ENCODE measurements at regions of chr12 and their contacts with region 1.

Region 1: GRCh38 chr12:104201238-104202001 is 14.2 kb upstream of the TXNRD1 start:
- DNase-seq: peak; percentile 74
- H3K4me3 ChIP-seq: no peak overlapping the region
- H3K27ac ChIP-seq: no peak overlapping the region
- H3K4me1 ChIP-seq: no peaks in the 10 kb centered on the region
- H3K27me3 ChIP-seq: peaks cover 0 to 3% of the 10 kb centered on the region in 2 experiments
- CTCF ChIP-seq: peak; percentile 79 to 83
- POLR2A ChIP-seq: no peak

Region 2: GRCh38 chr12:104177663-104178501 is 23.5 kb before region 1 on chr12:
- CTCF ChIA-PET with region 1: interaction called, 15 read pairs
- POLR2A ChIA-PET with region 1: no interaction called
- dilution Hi-C with region 1: no loop called
- intact Hi-C with region 1: no loop called
- DNase-seq: peak; percentile 80
- H3K4me3 ChIP-seq: no peak overlapping the region
- H3K27ac ChIP-seq: no peak overlapping the region
- H3K4me1 ChIP-seq: peaks cover 2% of the 10 kb centered on the region
- H3K27me3 ChIP-seq: no peaks in the 10 kb centered on the region
- CTCF ChIP-seq: peak; percentile 33 to 34
- POLR2A ChIP-seq: no peak

Region 3: GRCh38 chr12:104329707-104330532 is 128.5 kb after region 1 on chr12:
- CTCF ChIA-PET with region 1: no interaction called
- POLR2A ChIA-PET with region 1: no interaction called
- dilution Hi-C with region 1: no loop called
- intact Hi-C with region 1: no loop called
- DNase-seq: no peak
- H3K4me3 ChIP-seq: no peak overlapping the region
- H3K27ac ChIP-seq: no peak overlapping the region
- H3K4me1 ChIP-seq: no peaks in the 10 kb centered on the region
- H3K27me3 ChIP-seq: no peaks in the 10 kb centered on the region
- CTCF ChIP-seq: no peak
- POLR2A ChIP-seq: peak; percentile 33

Region 4: GRCh38 chr12:104358347-104359003 is 157.1 kb after region 1 on chr12:
- CTCF ChIA-PET with region 1: interaction called, 4 read pairs
- POLR2A ChIA-PET with region 1: no interaction called
- dilution Hi-C with region 1: no loop called
- intact Hi-C with region 1: loop called (anchors 1 kb)
- DNase-seq: peak; percentile 66
- H3K4me3 ChIP-seq: no peak overlapping the region
- H3K27ac ChIP-seq: no peak overlapping the region
- H3K4me1 ChIP-seq: peaks cover 2% of the 10 kb centered on the region
- H3K27me3 ChIP-seq: no peaks in the 10 kb centered on the region
- CTCF ChIP-seq: peak; percentile 72 to 81
- POLR2A ChIP-seq: no peak

Region 5: DNA sequence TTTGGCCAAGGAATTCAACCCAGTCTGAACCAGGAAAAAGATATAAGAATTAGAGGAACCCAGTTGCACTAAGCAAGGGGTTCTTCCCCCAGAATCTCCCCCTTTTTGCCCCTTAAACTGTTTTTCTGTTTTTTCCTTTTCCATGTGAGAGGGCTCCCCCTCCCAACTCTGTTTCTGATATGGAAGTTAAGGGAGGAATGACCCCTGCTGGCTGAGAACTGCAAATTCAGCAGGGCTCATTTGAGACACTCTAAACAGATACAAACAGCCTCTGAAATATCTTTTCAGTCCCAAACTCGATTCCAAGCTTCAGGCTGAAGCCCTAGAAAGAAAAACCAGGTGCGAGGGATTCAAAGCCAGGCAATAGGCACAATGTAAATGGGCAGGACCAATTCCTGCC is 624.0 kb after region 1 on chr12:
- CTCF ChIA-PET with region 1: no interaction called
- POLR2A ChIA-PET with region 1: no interaction called
- dilution Hi-C with region 1: no loop called
- intact Hi-C with region 1: loop called (anchors 1 kb)
- DNase-seq: no peak
- H3K4me3 ChIP-seq: no peak overlapping the region
- H3K27ac ChIP-seq: no peak overlapping the region
- H3K4me1 ChIP-seq: no peaks in the 10 kb centered on the region
- H3K27me3 ChIP-seq: no peaks in the 10 kb centered on the region
- CTCF ChIP-seq: peak; percentile 16 to 35
- POLR2A ChIP-seq: no peak

Region 6: DNA sequence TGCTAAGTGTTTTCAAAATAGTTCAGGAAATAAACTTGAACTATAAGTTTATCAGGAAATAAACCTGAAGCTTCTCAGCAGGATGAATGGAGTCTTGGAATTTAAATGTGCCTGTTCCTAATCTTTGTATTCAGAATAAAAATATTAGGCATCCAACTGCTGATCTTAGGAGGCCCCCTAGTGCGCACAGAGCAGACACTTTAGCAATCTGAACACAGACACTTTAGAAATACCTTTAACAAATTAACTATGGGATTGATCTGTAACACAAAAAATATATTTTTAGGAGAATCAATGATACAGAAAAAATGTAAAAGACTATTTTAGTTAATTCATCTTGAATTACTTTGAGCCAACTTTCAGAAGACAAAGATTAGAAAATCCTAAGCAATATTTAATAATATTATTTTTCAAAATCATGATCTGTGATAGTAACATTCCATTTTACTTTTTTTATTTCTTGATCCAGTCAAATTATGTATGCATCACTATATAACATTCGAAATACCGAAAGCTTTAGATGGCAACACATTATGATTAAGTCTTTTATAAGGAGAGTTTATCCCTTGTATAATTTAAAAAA is 675.8 kb after region 1 on chr12:
- CTCF ChIA-PET with region 1: no interaction called
- POLR2A ChIA-PET with region 1: no interaction called
- dilution Hi-C with region 1: no loop called
- intact Hi-C with region 1: loop called (anchors 2 kb)
- DNase-seq: peak; percentile 63
- H3K4me3 ChIP-seq: no peak overlapping the region
- H3K27ac ChIP-seq: no peak overlapping the region
- H3K4me1 ChIP-seq: no peaks in the 10 kb centered on the region
- H3K27me3 ChIP-seq: no peaks in the 10 kb centered on the region
- CTCF ChIP-seq: peak; percentile 27 to 50
- POLR2A ChIP-seq: no peak

Region 7: DNA sequence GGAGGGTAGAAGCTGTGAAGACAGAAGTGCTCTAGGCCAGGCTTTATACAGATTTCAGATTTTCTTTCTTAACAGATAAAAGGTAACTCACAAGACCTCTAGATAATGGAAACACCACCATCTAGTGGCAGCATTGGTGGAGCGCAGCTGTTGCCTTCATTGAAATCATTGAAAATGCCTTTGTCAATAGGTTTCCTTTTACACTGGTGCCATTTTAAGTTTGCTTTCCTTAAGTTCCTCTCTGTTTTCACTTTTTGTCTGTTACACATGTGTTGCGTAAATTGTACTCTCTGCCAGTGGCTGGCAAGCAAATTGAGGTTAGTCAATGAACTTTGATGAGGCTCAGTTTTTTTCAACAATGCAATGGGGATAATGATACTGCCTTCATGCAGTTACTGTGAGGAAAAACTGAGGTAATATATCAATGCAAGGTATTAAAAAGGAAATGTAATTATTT is 851.7 kb after region 1 on chr12:
- CTCF ChIA-PET with region 1: interaction called, 16 read pairs
- POLR2A ChIA-PET with region 1: no interaction called
- dilution Hi-C with region 1: no loop called
- intact Hi-C with region 1: loop called (anchors 1 kb)
- DNase-seq: peak; percentile 86
- H3K4me3 ChIP-seq: no peak overlapping the region
- H3K27ac ChIP-seq: no peak overlapping the region
- H3K4me1 ChIP-seq: no peaks in the 10 kb centered on the region
- H3K27me3 ChIP-seq: no peaks in the 10 kb centered on the region
- CTCF ChIP-seq: peak; percentile 80 to 81
- POLR2A ChIP-seq: no peak

Region 8: DNA sequence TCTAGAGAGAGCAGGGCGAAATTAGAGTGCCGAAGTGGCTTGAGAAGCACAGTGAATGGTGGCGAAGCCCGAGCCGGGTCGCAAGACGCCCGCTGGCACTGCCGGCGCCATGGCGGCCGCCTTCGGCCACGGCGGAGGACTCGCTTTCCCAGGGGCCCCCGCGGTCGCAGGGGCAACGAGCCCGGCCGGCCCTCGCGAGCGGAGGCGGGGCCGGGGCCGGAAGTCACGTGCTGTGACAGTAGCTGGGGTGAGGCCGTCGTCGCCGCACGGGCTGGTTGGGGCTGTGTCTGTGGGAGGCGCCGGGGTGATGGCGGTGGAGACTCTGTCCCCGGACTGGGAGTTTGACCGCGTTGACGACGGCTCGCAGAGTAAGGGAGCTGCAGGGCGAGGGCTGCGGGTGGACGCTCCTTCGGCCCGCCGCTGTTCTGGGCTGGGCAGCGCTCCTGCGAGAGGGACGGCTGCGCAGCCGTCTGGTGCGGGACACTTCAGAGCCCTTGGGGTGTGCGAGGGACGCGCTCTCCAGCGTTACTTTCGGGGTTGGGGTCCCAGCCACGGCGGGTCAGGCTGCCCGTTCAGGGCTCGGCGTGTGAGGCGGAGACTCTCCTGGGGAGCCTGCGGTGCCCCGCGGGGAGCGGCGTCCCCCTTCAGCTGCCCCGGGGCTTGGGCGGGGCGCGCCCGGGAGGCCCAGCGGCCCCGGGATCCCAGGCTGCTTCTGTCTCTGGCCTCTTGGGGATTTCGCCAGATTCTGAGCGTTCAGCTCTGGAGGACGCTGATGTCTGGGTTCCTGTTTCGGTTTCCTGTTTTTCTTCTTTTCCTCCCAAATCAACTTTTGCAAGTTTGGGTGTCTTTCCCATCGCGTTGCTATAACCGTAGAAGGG is 906.3 kb after region 1 on chr12 and contains the start of gene WASHC4:
- CTCF ChIA-PET with region 1: no interaction called
- POLR2A ChIA-PET with region 1: no interaction called
- dilution Hi-C with region 1: no loop called
- intact Hi-C with region 1: loop called (anchors 5 kb)
- DNase-seq: peak; percentile 94
- H3K4me3 ChIP-seq: peak within 1 kb of the TSS; percentile 94 to 99 (median 96)
- H3K27ac ChIP-seq: peak within 1 kb of the TSS; percentile 68
- H3K4me1 ChIP-seq: peaks cover 24% of the 10 kb centered on the region
- H3K27me3 ChIP-seq: no peaks in the 10 kb centered on the region
- CTCF ChIP-seq: peak in 1 of 2 donors; percentile 7
- POLR2A ChIP-seq: peak; percentile 99
- total RNA-seq, gene WASHC4: 99.8 and 123 TPM in 2 replicates

Measured in endothelial cell of umbilical vein (primary cell).